ENCODE measurements at regions of chr11 and their contacts with region 1.

Region 1: DNA sequence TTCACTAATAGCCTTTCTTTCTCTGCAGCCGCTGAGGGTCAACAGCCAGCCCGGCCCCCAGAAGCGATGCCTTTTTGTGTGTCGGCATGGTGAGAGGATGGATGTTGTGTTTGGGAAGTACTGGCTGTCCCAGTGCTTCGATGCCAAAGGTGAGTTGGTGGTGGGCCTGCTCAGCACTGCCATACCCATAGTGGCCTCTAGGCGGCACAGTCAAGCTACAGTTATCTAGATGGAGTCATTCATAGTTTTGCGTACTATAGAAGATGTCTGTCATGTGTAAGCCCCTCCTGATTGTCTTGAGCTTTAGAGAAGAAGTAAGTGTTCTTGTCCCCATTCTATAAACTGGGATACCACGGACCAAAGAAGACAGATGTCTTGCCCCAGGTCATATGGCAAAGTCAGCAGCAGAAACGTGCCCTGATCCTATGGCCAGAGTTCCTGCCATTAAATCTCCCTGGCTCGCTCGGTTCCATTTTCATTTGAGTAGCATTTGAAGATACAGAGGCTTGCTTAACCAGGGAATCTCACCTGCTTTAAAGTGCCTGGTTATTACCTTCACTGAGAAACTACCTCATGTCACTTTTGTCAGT is 42.1 kb upstream of the CRTAM start:
- DNase-seq: peak; percentile 84
- H3K4me3 Mint-ChIP-seq: no peak overlapping the region
- H3K27ac Mint-ChIP-seq: no peak overlapping the region
- H3K4me1 Mint-ChIP-seq: peaks cover 2% of the 10 kb centered on the region
- H3K27me3 Mint-ChIP-seq: no peaks in the 10 kb centered on the region

Region 2: GRCh38 chr11:122578168-122578825 is 217.9 kb before region 1 on chr11:
- CTCF ChIA-PET with region 1: interaction called, 14 read pairs
- intact Hi-C with region 1: loop called (anchors 5 kb)
- DNase-seq: peak; percentile 17
- H3K4me3 Mint-ChIP-seq: no peak overlapping the region
- H3K27ac Mint-ChIP-seq: no peak overlapping the region
- H3K4me1 Mint-ChIP-seq: peaks cover 7% of the 10 kb centered on the region
- H3K27me3 Mint-ChIP-seq: no peaks in the 10 kb centered on the region

Region 3: DNA sequence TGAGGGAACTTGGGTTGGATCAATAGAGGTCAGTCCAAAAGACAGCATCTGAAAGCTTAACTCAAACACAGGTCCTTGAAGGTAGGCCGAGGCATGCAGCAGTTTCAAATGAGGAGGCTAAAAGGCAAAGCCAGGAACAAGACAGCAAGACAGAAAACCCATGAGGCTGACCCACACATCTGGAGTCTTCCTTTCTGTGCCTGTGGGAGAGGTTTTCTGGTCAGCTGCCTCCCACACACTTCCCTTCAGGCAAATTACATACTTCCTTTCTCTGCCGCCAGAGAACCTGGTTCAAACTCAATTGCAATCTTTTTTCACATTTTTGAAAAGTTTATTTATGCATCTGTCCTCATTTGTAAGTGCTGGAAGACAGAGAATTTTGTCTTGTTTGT is 12.3 kb after region 1 on chr11:
- CTCF ChIA-PET with region 1: interaction called, 34 read pairs
- intact Hi-C with region 1: no loop called
- DNase-seq: peak; percentile 18
- H3K4me3 Mint-ChIP-seq: no peak overlapping the region
- H3K27ac Mint-ChIP-seq: peak overlapping the region; percentile 47
- H3K4me1 Mint-ChIP-seq: peaks cover 34% of the 10 kb centered on the region
- H3K27me3 Mint-ChIP-seq: no peaks in the 10 kb centered on the region

Region 4: DNA sequence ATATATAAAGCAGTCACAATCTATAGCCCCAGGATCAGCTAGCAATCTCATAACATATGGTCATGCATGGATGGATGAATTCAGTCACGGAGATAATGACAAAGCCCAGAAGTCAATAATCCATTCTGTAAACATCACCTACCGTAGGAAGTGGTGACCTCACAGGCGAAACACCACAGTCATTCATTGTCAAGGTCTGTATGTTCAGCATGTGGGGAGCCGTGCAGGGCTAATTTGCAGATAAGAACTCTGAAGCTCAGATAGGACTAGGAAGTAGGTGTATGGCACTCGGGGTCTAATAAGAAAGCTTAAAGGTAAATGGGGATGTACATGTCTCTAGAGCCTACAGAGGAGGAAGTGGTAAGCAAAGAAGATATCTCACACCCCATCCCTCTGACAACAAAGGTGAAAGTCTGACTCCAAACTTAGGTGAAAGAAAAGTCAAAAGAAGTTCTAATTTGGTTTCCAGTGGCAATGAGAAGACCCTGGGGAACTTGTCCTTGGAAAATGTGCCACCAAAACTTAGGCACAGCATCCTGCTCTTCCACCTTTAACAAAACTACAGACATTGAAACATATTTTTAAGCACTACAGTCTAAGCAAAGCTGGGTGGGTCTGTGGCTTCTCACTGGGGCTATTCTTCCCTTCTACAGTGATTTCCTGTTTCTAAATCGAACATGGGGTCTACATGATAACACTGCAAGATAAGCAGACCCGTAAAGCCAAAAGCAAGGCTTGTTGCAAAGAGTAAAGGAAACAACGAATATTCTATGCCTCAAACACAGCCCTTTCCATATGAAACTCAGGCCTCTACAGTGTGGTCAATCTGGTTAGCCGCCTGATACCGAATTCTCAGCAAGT is 47.3 kb after region 1 on chr11:
- CTCF ChIA-PET with region 1: interaction called, 12 read pairs
- intact Hi-C with region 1: no loop called
- DNase-seq: peak; percentile 71
- H3K4me3 Mint-ChIP-seq: peak overlapping the region; percentile 38
- H3K27ac Mint-ChIP-seq: peak overlapping the region; percentile 43
- H3K4me1 Mint-ChIP-seq: peaks cover 30% of the 10 kb centered on the region
- H3K27me3 Mint-ChIP-seq: no peaks in the 10 kb centered on the region

Region 5: DNA sequence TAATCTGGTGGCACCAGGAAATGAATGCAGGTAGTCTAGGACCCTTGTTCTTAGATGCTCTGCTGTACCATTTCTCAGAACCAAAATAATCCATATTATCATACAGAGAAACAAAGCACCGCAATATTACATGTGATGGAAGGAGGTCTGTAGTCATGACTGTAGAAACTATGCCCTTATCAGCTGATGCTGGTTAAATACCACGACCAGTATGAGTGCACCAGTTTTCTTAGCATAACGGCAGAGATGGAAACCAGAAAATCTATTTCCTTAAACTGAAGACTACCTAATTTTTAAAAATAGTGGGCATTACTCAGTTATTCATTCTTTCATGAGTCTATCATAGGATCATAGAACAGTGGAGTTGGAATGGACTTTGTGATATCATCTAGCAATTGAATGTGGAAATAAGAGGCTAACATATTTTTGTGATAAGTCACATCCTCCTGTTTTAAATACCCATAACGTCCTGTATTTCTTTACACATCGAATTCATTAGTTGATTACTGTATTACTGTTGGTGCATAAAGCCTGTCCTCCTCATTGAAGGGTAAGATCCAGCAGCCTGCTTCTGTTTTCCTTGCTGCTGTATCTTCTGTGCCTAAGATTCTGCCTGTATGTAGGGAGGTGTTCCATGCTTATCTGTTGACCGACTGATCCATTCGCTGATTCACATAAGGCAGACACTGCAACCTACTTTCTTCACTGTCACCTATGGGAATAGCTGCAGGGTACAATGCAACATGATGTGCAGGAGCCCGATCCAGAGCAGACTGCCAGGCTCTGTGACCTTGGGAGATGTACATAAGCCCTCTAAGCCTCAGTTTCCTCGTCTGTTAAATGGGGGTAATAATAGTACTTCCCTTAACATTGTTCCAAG is 101.6 kb after region 1 on chr11:
- CTCF ChIA-PET with region 1: no interaction called
- intact Hi-C with region 1: no loop called
- DNase-seq: no peak
- H3K4me3 Mint-ChIP-seq: no peak overlapping the region
- H3K27ac Mint-ChIP-seq: no peak overlapping the region
- H3K4me1 Mint-ChIP-seq: no peaks in the 10 kb centered on the region
- H3K27me3 Mint-ChIP-seq: no peaks in the 10 kb centered on the region

Region 6: DNA sequence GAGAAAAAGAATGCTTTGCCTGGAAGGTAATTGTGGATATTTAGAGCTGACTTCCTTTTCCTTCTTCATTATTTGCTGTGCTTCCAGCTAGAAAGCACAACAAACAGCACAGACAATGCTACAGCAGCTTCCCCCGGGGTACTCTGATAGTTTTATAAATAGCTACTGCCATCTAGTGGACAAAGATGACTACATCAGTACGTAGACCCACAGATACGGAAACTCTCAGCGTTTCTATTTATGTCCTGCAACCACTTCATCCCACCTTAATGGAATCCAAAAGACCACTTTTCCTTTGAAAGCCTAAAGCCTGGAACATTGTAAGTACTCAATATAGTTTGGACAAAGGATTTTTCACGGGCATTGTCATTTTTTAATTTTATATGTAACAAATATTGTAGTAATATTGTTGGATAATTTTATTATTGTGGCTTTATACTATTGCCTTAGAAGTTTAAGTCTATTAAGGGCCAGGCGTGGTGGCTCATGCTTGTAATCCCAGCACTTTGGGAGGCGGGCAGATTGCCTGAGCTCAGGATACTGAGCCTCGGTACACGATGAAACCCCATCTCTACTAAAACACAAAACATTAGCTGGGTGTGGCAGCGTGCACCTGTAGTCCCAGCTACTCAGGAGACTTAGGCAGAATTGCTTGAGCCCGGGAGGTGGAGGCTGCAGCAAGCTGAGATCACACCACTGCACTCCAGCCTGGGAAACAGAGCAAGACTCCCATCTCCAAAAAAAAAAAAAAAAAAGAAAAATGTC is 258.3 kb after region 1 on chr11:
- CTCF ChIA-PET with region 1: no interaction called
- intact Hi-C with region 1: loop called (anchors 10 kb)
- DNase-seq: peak; percentile 17
- H3K4me3 Mint-ChIP-seq: no peak overlapping the region
- H3K27ac Mint-ChIP-seq: peak overlapping the region; percentile 70
- H3K4me1 Mint-ChIP-seq: peaks cover 37% of the 10 kb centered on the region
- H3K27me3 Mint-ChIP-seq: no peaks in the 10 kb centered on the region